Pancreas (tissue), 10 donors: ENCODE measurements at regions of chr22 and their contacts with region 1.

Region 1: DNA sequence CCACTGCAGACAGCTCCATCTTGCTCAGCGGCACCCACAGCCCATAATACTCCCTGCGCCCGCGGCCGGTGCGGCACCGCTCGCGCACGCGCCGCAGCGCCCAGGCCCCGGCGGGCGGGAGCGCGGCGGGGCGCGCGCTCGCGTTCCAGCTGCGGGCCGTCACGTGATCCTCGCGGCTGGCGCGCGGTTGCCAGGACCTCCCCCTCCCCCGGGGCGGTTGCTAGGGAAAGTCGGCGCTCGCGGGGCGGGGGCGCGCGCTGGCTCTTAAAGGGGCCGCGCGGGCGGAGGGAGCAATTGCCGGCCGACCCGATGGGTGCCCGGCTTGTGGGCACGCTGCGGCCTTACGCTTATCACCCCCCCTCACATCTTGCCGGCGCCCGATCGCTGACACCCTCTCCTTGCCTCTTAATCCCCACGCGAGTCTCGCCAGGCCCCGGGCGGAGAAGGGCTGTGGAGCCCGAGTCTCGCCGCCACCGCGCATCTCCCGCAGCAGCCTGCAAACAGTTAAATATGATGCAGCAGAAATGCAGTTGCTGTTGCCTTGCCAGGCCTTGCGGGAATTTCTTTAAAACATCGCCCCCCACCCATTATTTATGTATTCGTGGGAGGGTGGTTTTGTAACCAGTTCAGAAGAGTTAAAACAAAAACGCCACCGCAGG is at the start of gene CBX6:
- DNase-seq: peak; percentile 95 to 98 (median 96)
- ATAC-seq: peak; percentile 83 to 87 (median 85)
- H3K4me3 ChIP-seq: peak within 1 kb of the TSS; percentile 57 to 69 (median 61)
- H3K27ac ChIP-seq: peak within 1 kb of the TSS; percentile 84 to 93 (median 90)
- H3K4me1 ChIP-seq: peaks cover 0 to 16% (median 13%) of the 10 kb centered on the region in 3 donors
- H3K27me3 ChIP-seq: no peaks in the 10 kb centered on the region
- CTCF ChIP-seq: no peak
- total RNA-seq, gene CBX6: 22.5 to 44.6 (median 29.2) TPM

Region 2: DNA sequence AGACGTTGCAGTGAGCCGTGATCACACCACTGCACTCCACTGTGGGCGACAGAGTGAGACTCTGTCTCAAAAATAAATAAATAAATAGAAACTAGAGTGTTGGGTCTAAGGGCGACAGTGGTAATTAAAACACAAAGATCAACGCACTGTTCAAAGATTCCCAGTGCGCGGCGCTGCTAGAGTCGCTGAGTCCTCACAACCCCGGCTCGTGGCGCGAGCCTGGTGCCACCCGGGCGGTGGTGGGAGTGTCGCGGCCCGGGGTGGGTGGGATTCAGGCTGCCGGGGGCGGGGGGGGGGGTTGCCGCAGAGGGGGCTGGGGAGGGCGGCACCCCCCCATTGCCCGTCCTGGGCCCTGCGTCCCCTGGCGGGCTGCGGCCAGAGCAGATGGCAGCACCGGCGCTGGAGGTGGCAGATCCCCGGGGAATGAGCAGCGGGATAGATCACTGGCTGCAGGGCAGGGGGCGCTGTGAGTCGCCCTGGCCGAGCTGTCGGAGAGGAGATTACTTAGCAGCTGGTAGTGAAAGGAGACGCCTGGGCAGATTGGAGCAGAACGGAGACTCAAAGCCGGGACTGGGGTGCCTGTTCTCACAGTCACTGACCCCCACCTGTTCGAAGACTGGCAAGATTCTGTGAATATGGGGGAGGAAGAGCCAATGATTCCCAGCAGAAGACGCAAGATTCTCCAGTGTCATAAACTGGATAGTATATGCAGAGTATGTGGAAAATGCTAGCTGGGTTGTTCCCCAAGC is 54.9 kb after region 1 on chr22:
- intact Hi-C with region 1: loop called in 1 of 3 experiments (anchors 10 kb)
- DNase-seq: peak; percentile 82 to 94 (median 87)
- ATAC-seq: peak; percentile 73 to 86 (median 78)
- H3K4me3 ChIP-seq: peak overlapping the region in 3 of 4 donors; percentile 1 to 42 (median 35)
- H3K27ac ChIP-seq: peak overlapping the region in 3 of 4 donors; percentile 58 to 66 (median 64)
- H3K4me1 ChIP-seq: peaks cover 23 to 27% (median 25%) of the 10 kb centered on the region in 3 donors
- H3K27me3 ChIP-seq: no peaks in the 10 kb centered on the region
- CTCF ChIP-seq: peak; percentile 60 to 70 (median 62)

Region 3: GRCh38 chr22:38996105-38996504 is 123.8 kb after region 1 on chr22:
- intact Hi-C with region 1: loop called in 1 of 3 experiments (anchors 5 kb)
- DNase-seq: no peak
- ATAC-seq: no peak
- H3K4me3 ChIP-seq: no peak overlapping the region
- H3K27ac ChIP-seq: no peak overlapping the region
- H3K4me1 ChIP-seq: peaks cover 0 to 4% (median 0%) of the 10 kb centered on the region in 3 donors
- H3K27me3 ChIP-seq: no peaks in the 10 kb centered on the region
- CTCF ChIP-seq: no peak

Region 4: GRCh38 chr22:39117585-39118191 is 245.4 kb after region 1 on chr22:
- intact Hi-C with region 1: loop called in 2 of 3 experiments (anchors 10 kb)
- DNase-seq: peak in 3 of 6 donors; percentile 39 to 55 (median 54)
- ATAC-seq: peak in 3 of 4 donors; percentile 69 to 84 (median 71)
- H3K4me3 ChIP-seq: no peak overlapping the region
- H3K27ac ChIP-seq: no peak overlapping the region
- H3K4me1 ChIP-seq: no peaks in the 10 kb centered on the region
- H3K27me3 ChIP-seq: peaks cover 0 to 3% (median 0%) of the 10 kb centered on the region in 4 donors
- CTCF ChIP-seq: peak in 3 of 4 donors; percentile 18 to 27 (median 23)

Region 5: GRCh38 chr22:39123751-39124601 is 251.7 kb after region 1 on chr22:
- intact Hi-C with region 1: loop called in 2 of 3 experiments (anchors 10 kb)
- DNase-seq: peak in 2 of 6 donors; percentile 25 to 51
- ATAC-seq: peak in 1 of 4 donors; percentile 27
- H3K4me3 ChIP-seq: no peak overlapping the region
- H3K27ac ChIP-seq: no peak overlapping the region
- H3K4me1 ChIP-seq: no peaks in the 10 kb centered on the region
- H3K27me3 ChIP-seq: no peaks in the 10 kb centered on the region
- CTCF ChIP-seq: no peak